GM12878 (cell line): ENCODE measurements at regions of chr4 and their contacts with region 1.

Region 1: DNA sequence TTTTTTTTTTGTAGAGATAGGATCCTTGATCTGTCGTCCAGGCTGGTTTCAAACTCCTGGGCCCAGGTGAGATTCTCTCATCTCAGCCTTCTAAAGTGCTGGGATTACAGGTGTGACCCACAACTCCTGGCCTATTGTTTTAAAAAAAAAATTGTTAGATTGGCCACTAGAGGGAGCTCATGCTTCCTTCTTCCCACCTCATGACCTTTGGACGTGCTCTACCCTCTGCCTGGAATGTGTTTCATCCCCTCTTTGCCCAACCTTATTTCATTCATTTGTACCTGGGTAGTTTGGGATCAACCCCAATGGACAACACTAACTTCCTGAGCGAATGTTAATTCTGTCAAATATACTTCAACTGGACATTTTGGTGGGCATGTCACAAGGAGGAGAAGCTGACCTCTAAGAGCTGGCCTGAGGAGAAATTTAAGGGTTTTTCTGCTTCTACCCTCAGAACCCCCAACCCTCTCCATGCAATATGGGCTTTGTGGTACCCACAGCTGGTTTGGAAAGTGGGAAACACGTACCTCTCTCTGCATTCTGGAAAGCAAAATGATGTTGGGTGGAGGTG is 6.4 kb downstream of the PPEF2 start:
- DNase-seq: no peak
- ATAC-seq: peak; percentile 87
- H3K4me3 ChIP-seq: no peak overlapping the region
- H3K27ac ChIP-seq: no peak overlapping the region
- H3K4me1 ChIP-seq: no peaks in the 10 kb centered on the region
- H3K27me3 ChIP-seq: no peaks in the 10 kb centered on the region
- CTCF ChIP-seq: peak; percentile 59 to 64 (median 63)
- EP300 ChIP-seq: no peak
- POLR2A ChIP-seq: no peak
- RAD21 ChIP-seq: peak; percentile 41

Region 2: DNA sequence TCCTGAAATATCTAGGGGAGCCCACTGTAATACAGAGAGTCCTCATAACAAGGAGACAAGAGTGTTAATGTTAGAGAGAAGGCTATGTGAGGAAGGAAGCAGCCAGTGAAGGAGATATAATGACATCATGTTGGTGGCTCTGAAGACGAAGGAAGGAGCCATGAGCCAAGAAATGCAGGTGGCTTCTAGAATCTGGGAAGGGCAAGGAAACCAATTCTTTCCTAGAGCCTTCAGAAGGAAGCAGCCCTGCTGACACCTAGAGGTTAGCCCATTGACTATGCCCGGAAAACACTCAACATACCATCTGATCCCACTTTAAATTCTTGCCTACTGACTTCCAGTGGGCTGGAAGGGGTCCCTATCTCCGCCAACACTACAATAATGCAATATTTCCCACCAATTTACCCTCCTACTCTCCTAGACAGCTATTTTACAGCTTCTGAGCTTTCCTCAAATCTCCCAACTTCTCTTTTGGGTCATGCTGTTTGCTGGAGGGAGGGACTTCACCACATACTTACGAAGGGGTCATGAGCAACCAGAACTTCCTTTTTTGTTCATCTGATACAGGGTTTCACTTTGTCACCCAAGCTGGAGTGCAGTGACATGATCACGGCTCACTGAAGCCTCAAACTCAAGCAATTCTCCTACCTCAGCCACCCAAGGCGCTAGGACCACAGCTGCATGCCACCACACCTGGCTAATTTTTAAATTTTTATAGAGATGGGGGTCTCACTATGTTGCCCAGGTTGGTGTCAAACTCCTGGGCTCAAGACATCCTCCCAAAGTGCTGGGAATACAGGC is 197.5 kb before region 1 on chr4:
- CTCF ChIA-PET with region 1: no interaction called
- POLR2A ChIA-PET with region 1: no interaction called
- RAD21 ChIA-PET with region 1: no interaction called
- SMC1A ChIA-PET with region 1: no interaction called
- in situ Hi-C with region 1: no loop called
- intact Hi-C with region 1: no loop called
- DNase-seq: peak; percentile 66
- ATAC-seq: peak; percentile 97
- H3K4me3 ChIP-seq: peak overlapping the region; percentile 54; the same call in 1 of the 2 replicates
- H3K27ac ChIP-seq: peak overlapping the region; percentile 90
- H3K4me1 ChIP-seq: peaks cover 21% of the 10 kb centered on the region
- H3K27me3 ChIP-seq: no peaks in the 10 kb centered on the region
- CTCF ChIP-seq: no peak
- EP300 ChIP-seq: no peak
- POLR2A ChIP-seq: no peak
- RAD21 ChIP-seq: no peak

Region 3: DNA sequence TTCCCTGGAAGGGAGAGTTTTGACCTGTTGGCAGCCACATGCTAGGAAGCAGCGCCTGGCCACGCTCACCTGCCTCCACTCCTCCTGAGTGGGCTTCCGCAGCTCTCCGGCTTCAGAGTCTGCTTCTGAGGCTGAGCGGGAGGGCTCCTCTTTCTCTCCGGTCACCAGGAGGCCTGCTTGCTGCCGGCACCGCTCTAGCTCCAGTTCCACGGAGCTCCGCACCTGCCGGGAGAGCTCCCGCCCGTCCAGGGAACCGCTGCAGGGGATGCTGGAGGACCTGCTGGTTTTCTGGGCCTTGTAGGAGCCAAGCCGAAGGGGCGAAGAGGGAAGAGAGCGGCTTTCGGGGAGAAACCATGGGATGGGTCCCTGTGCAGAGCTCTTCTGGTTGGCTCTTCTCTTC is 19.6 kb before region 1 on chr4:
- CTCF ChIA-PET with region 1: interaction called, 15 read pairs
- POLR2A ChIA-PET with region 1: no interaction called
- RAD21 ChIA-PET with region 1: no interaction called
- SMC1A ChIA-PET with region 1: no interaction called
- in situ Hi-C with region 1: no loop called
- intact Hi-C with region 1: no loop called
- DNase-seq: no peak
- ATAC-seq: no peak
- H3K4me3 ChIP-seq: no peak overlapping the region
- H3K27ac ChIP-seq: no peak overlapping the region
- H3K4me1 ChIP-seq: no peaks in the 10 kb centered on the region
- H3K27me3 ChIP-seq: peaks cover 0 to 1% of the 10 kb centered on the region in 2 experiments; a peak in 3 of 4 replicates
- CTCF ChIP-seq: no peak
- EP300 ChIP-seq: no peak
- POLR2A ChIP-seq: no peak
- RAD21 ChIP-seq: no peak

Region 4: GRCh38 chr4:75908555-75908954 is 12.7 kb after region 1 on chr4:
- CTCF ChIA-PET with region 1: interaction called, 26 read pairs
- POLR2A ChIA-PET with region 1: no interaction called
- RAD21 ChIA-PET with region 1: interaction called, 3 read pairs
- SMC1A ChIA-PET with region 1: interaction called, 5 read pairs
- in situ Hi-C with region 1: no loop called
- intact Hi-C with region 1: no loop called
- DNase-seq: no peak
- ATAC-seq: no peak
- H3K4me3 ChIP-seq: no peak overlapping the region
- H3K27ac ChIP-seq: no peak overlapping the region
- H3K4me1 ChIP-seq: no peaks in the 10 kb centered on the region
- H3K27me3 ChIP-seq: no peaks in the 10 kb centered on the region; a peak in 2 of 4 replicates
- CTCF ChIP-seq: no peak
- EP300 ChIP-seq: no peak
- POLR2A ChIP-seq: no peak
- RAD21 ChIP-seq: no peak

Region 5: GRCh38 chr4:75973766-75974165 is 77.9 kb after region 1 on chr4:
- CTCF ChIA-PET with region 1: no interaction called
- POLR2A ChIA-PET with region 1: no interaction called
- RAD21 ChIA-PET with region 1: no interaction called
- SMC1A ChIA-PET with region 1: no interaction called
- in situ Hi-C with region 1: no loop called
- intact Hi-C with region 1: no loop called
- DNase-seq: no peak
- ATAC-seq: no peak
- H3K4me3 ChIP-seq: no peak overlapping the region
- H3K27ac ChIP-seq: no peak overlapping the region
- H3K4me1 ChIP-seq: no peaks in the 10 kb centered on the region
- H3K27me3 ChIP-seq: no peaks in the 10 kb centered on the region
- CTCF ChIP-seq: no peak
- EP300 ChIP-seq: no peak
- POLR2A ChIP-seq: no peak
- RAD21 ChIP-seq: no peak

Region 6: DNA sequence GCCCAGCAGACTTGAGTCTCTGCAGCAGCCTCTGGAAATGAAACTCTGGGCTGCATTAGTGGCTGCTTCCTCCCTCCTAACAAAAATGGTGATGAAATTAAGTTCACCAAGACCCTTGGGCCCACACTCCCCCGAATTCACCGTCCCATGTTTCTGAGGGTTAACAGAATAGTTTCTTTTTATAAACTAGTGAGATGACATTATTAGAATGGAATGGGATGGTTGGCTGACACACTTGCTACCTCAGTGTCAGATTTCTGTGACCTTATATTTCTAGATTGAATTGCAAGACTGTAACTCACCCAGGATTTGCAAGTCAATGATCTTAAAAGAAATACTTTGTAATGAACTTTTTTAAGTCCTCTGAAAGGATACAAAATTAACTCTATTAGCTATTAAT is 666.3 kb after region 1 on chr4:
- CTCF ChIA-PET with region 1: no interaction called
- POLR2A ChIA-PET with region 1: no interaction called
- RAD21 ChIA-PET with region 1: no interaction called
- SMC1A ChIA-PET with region 1: no interaction called
- in situ Hi-C with region 1: no loop called
- intact Hi-C with region 1: no loop called
- DNase-seq: no peak
- ATAC-seq: no peak
- H3K4me3 ChIP-seq: no peak overlapping the region
- H3K27ac ChIP-seq: no peak overlapping the region
- H3K4me1 ChIP-seq: no peaks in the 10 kb centered on the region
- H3K27me3 ChIP-seq: peaks cover 2 to 14% of the 10 kb centered on the region in 2 experiments; a peak in 2 of 4 replicates
- CTCF ChIP-seq: no peak
- EP300 ChIP-seq: no peak
- POLR2A ChIP-seq: no peak
- RAD21 ChIP-seq: no peak